ENCODE measurements at regions of chr9 and their contacts with region 1.

Region 1: GRCh38 chr9:15073620-15074019 is 163.4 kb upstream of the FREM1 start:
- DNase-seq: no peak
- H3K4me3 ChIP-seq: no peak overlapping the region
- H3K27ac ChIP-seq: no peak overlapping the region
- H3K4me1 ChIP-seq: peaks cover 26% of the 10 kb centered on the region
- H3K27me3 ChIP-seq: no peaks in the 10 kb centered on the region
- CTCF ChIP-seq: no peak
- POLR2A ChIP-seq: no peak

Region 2: DNA sequence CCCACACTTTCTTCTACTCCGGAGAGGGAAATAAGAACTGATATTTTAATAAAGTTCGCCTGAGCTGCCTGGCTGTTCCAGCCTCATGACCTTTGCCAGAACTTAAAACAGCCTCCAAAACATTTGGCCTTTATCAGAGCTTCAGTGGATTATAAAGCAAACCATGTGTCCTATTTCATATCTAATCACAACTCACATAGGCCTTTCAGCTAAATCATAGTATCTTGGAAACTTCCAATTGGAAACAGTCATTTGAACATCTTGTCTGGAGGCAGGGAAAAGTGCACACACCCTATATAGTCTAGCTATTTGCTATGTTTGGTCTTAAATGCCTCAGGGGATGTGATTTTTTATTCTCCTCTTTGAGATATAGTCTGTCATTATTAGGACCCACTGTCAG is 117.4 kb before region 1 on chr9:
- CTCF ChIA-PET with region 1: no interaction called
- POLR2A ChIA-PET with region 1: no interaction called
- dilution Hi-C with region 1: no loop called
- intact Hi-C with region 1: no loop called
- DNase-seq: no peak
- H3K4me3 ChIP-seq: no peak overlapping the region
- H3K27ac ChIP-seq: no peak overlapping the region
- H3K4me1 ChIP-seq: peaks cover 5% of the 10 kb centered on the region
- H3K27me3 ChIP-seq: no peaks in the 10 kb centered on the region
- CTCF ChIP-seq: no peak
- POLR2A ChIP-seq: no peak

Region 3: DNA sequence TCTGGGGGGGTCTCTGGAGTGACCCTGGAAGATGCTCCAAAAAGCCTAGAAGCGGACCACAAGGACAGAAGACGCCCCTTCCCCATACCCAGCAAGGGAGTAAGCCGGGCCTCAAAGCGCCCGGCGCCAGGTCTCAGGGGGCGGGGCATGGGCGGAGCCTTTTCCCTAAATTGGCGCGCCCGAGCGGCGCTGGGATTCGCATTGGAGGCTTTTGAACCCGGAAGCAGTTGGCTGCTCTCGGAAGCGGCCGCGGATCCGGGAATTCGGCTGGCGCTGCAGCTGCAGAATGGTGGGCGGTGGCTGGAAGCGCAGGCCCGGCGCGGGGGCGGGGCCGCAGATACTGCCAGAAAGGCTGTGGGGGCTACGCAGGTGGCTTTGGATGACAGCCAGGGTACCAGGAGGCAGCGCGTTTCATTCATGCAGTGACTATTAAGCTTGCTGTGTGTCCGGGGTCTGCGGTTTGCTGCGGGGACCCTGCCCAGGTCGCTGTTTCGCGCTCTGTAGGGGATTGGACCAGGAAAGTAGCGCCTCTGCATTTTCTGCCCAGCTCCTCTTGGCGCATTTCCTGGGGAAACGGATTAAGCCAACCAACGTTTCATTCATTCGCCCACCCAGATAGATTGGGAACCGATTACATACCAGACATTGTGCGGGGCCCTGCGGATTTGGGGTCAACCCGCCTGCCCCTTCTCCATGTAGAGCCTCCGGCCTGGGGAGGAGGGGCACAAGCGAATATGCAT is 80.4 kb before region 1 on chr9:
- CTCF ChIA-PET with region 1: no interaction called
- POLR2A ChIA-PET with region 1: no interaction called
- dilution Hi-C with region 1: no loop called
- intact Hi-C with region 1: loop called (anchors 5 kb)
- DNase-seq: peak; percentile 84
- H3K4me3 ChIP-seq: peak overlapping the region; percentile 33 to 69 (median 45)
- H3K27ac ChIP-seq: peak overlapping the region; percentile 88
- H3K4me1 ChIP-seq: peaks cover 15% of the 10 kb centered on the region
- H3K27me3 ChIP-seq: no peaks in the 10 kb centered on the region
- CTCF ChIP-seq: no peak
- POLR2A ChIP-seq: peak; percentile 62

Region 4: GRCh38 chr9:15086778-15087324 is 13.2 kb after region 1 on chr9:
- CTCF ChIA-PET with region 1: no interaction called
- POLR2A ChIA-PET with region 1: no interaction called
- dilution Hi-C with region 1: no loop called
- intact Hi-C with region 1: no loop called
- DNase-seq: no peak
- H3K4me3 ChIP-seq: no peak overlapping the region
- H3K27ac ChIP-seq: no peak overlapping the region
- H3K4me1 ChIP-seq: no peaks in the 10 kb centered on the region
- H3K27me3 ChIP-seq: peaks cover 0 to 2% of the 10 kb centered on the region in 2 experiments
- CTCF ChIP-seq: no peak
- POLR2A ChIP-seq: no peak

Region 5: GRCh38 chr9:15116130-15116580 is 42.5 kb after region 1 on chr9:
- CTCF ChIA-PET with region 1: no interaction called
- POLR2A ChIA-PET with region 1: no interaction called
- dilution Hi-C with region 1: no loop called
- intact Hi-C with region 1: loop called (anchors 5 kb)
- DNase-seq: no peak
- H3K4me3 ChIP-seq: no peak overlapping the region
- H3K27ac ChIP-seq: no peak overlapping the region
- H3K4me1 ChIP-seq: no peaks in the 10 kb centered on the region
- H3K27me3 ChIP-seq: peaks cover 4 to 7% of the 10 kb centered on the region in 2 experiments
- CTCF ChIP-seq: no peak
- POLR2A ChIP-seq: no peak

Measured in endothelial cell of umbilical vein (primary cell).